Esophagus muscularis mucosa (tissue), 4 donors: ENCODE measurements at regions of chr15 and their contacts with region 1.

Region 1: DNA sequence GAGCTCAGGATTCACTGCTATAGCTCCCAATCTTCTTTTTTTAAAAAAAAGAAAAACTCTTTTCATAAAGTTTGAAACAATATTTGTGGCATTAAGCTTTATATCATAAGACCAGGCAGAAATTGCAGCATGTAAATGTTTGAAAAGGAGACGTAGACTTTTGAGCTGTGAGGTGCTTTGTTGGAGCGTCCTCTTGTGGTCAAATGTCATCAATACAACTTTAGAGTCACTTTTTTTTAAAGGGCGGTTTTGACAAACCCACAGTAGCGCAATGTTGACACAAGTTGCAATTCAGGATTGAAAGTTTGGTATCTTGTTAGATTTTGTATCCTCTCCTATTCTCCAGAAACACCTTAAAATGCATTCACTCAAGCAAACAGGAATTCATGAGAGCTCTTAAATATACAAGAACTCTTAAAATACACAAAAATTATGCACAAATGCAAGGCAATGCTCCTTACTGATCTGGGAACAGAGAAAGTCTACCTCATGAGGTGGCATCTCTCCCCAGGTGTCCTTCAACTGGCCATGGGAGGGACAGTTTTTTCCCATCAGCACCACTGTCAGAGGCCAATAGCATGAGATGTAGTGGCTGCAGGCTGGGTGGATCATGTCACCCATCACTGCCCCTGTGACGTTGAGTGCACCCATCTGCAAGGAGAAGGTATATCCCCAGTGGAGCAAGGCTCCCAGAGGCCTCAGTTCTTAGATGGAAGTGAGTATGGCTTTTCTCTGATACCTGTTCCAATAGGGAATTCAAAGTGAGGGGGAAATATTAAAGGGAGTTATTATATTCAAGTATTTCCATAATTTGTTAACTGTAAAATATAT is 70.7 kb downstream of the ANXA2 start:
- DNase-seq: no peak
- H3K4me3 ChIP-seq: no peak overlapping the region
- H3K27ac ChIP-seq: no peak overlapping the region
- H3K4me1 ChIP-seq: peaks cover 0 to 5% (median 0%) of the 10 kb centered on the region in 4 donors
- H3K27me3 ChIP-seq: peaks cover 3 to 54% (median 18%) of the 10 kb centered on the region in 4 donors
- CTCF ChIP-seq: peak; percentile 46 to 67 (median 61)
- EP300 ChIP-seq: no peak
- POLR2A ChIP-seq: no peak

Region 2: DNA sequence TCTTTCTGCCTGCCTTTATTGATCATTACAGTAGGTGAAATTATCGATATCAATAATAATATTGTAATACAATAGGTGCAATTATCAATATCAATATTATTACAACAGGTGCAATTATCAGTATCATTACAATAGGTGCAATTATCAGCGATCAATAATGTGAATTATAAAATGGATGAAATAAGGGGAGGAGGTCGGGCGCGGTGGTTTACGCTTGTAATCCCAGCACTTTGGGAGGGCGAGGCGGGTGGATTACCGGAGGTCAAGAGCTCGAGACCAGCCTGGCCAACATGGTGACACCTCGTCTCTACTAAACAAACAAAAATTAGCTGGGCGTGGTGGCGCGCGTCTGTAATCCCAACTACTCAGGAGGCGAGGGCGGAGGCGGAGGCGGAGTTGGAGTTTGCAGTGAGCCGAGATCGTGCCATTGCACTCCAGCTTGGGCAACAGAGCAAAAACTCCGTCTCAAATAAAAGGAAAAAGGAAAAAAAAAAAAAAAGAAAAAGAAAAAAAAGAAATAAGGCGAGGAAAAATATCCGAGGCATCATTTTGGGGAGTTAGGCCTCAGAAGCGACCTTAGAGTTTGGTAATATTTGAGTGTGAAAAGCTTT is 637.3 kb before region 1 on chr15:
- intact Hi-C with region 1: loop called (anchors 10 kb)
- DNase-seq: peak; percentile 97
- H3K4me3 ChIP-seq: peak overlapping the region; percentile 84 to 96 (median 88)
- H3K27ac ChIP-seq: peak overlapping the region; percentile 96 to 99 (median 98)
- H3K4me1 ChIP-seq: peaks cover 35 to 48% (median 43%) of the 10 kb centered on the region in 4 donors
- H3K27me3 ChIP-seq: no peaks in the 10 kb centered on the region
- CTCF ChIP-seq: peak in 1 of 3 experiments; percentile 13
- EP300 ChIP-seq: no peak
- POLR2A ChIP-seq: no peak

Region 3: GRCh38 chr15:59725172-59725486 is 601.9 kb before region 1 on chr15:
- intact Hi-C with region 1: loop called (anchors 10 kb)
- DNase-seq: peak; percentile 5
- H3K4me3 ChIP-seq: no peak overlapping the region
- H3K27ac ChIP-seq: no peak overlapping the region
- H3K4me1 ChIP-seq: no peaks in the 10 kb centered on the region
- H3K27me3 ChIP-seq: peaks cover 0 to 24% (median 2%) of the 10 kb centered on the region in 4 donors
- CTCF ChIP-seq: no peak
- EP300 ChIP-seq: no peak
- POLR2A ChIP-seq: no peak

Region 4: GRCh38 chr15:60079210-60079609 is 247.8 kb before region 1 on chr15:
- intact Hi-C with region 1: no loop called
- DNase-seq: no peak
- H3K4me3 ChIP-seq: no peak overlapping the region
- H3K27ac ChIP-seq: no peak overlapping the region
- H3K4me1 ChIP-seq: no peaks in the 10 kb centered on the region
- H3K27me3 ChIP-seq: peaks cover 0 to 5% (median 0%) of the 10 kb centered on the region in 4 donors
- CTCF ChIP-seq: no peak
- EP300 ChIP-seq: no peak
- POLR2A ChIP-seq: no peak

Region 5: DNA sequence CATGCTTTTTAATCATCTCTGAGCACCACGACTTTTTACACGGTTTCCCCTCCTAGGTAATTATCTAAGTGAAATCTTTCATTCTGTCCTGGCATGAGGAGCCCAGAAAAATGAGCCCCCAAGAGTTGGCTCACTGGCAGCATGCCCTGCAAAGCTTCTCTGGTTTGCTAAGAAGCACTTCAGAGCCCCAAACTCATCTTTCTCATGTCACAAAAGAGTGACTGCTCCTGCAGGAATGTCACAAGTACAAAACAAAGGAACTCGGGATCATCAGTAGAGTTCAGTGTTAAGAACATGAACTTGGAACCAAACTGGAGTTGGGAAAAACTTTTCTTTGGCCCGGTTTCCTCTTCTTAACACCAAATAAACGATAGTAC is 199.1 kb before region 1 on chr15:
- intact Hi-C with region 1: no loop called
- DNase-seq: peak; percentile 89
- H3K4me3 ChIP-seq: peak overlapping the region; percentile 54 to 62 (median 57)
- H3K27ac ChIP-seq: peak overlapping the region; percentile 61 to 81 (median 74)
- H3K4me1 ChIP-seq: peaks cover 0 to 15% (median 14%) of the 10 kb centered on the region in 4 donors
- H3K27me3 ChIP-seq: peaks cover 0 to 11% (median 0%) of the 10 kb centered on the region in 4 donors
- CTCF ChIP-seq: no peak
- EP300 ChIP-seq: no peak
- POLR2A ChIP-seq: no peak